ENCODE measurements at regions of chr14 and their contacts with region 1.

Region 1: DNA sequence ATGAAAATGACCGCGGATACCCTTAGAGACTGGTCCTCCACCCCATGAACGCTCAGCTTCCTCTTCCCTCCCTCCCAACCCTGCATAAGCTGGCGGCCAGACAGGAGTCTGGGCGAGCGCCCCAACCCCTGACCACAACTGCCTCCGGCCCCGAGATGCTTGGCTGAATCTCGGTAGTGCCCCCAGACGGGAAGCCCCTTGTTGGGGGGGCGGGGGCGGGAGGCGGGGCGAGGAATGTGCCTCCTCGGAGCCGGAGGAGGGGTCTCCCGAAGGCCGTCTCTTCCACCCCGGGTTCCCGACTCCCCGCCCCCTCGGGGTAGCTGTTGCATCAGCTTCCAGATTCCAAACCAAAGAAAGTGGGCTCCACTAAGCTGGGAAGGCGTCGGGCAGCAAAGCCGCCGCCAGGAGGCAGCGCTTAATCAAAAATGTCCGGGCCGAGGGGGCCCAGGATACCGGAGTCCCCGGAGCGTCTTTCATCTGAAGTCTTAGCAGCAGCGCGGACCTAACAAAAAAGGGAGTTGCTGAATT is 7.1 kb upstream of the MRPL52 start:
- DNase-seq: peak; percentile 66 to 81 (median 71)
- H3K4me3 ChIP-seq: peak overlapping the region in 1 of 4 donors; percentile 42
- H3K27ac ChIP-seq: peak overlapping the region in 1 of 5 donors; percentile 18
- H3K4me1 ChIP-seq: peaks cover 0 to 26% of the 10 kb centered on the region in 2 donors
- H3K27me3 ChIP-seq: no peaks in the 10 kb centered on the region
- CTCF ChIP-seq: peak; percentile 59 to 80 (median 76)
- POLR2A ChIP-seq: no peak

Region 2: GRCh38 chr14:22630486-22630885 is 192.1 kb before region 1 on chr14:
- intact Hi-C with region 1: no loop called
- DNase-seq: no peak
- H3K4me3 ChIP-seq: no peak overlapping the region
- H3K27ac ChIP-seq: no peak overlapping the region
- H3K4me1 ChIP-seq: no peaks in the 10 kb centered on the region
- H3K27me3 ChIP-seq: no peaks in the 10 kb centered on the region
- CTCF ChIP-seq: no peak
- POLR2A ChIP-seq: no peak

Region 3: GRCh38 chr14:22653012-22653621 is 169.5 kb before region 1 on chr14:
- intact Hi-C with region 1: loop called in 1 of 2 experiments (anchors 10 kb)
- DNase-seq: peak; percentile 63 to 83 (median 72)
- H3K4me3 ChIP-seq: no peak overlapping the region
- H3K27ac ChIP-seq: no peak overlapping the region
- H3K4me1 ChIP-seq: no peaks in the 10 kb centered on the region
- H3K27me3 ChIP-seq: no peaks in the 10 kb centered on the region
- CTCF ChIP-seq: peak; percentile 60 to 89 (median 86)
- POLR2A ChIP-seq: no peak